HepG2 (cell line): ENCODE measurements at regions of chr12 and their contacts with region 1.

Region 1: DNA sequence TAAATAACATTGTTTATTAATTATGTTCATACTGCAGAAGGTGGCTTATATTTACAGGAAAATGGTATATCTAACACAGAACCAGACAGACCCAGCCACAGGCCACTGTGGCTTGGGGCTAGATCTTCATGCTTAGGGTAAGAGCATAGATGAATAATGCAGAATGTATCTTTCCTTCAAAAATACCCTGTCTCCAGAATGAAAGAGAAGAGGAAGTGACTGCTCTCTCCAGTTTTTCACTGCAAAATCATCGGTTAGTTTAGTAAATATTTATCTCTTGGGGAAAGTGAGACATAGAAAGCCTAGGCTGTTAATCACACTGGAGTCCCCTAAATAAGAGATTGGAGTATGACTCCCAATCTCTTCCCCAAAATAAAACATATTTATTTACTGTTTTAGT is 453.7 kb downstream of the NAV3 start:
- DNase-seq: no peak
- ATAC-seq: no peak
- H3K4me3 ChIP-seq: no peak overlapping the region
- H3K27ac ChIP-seq: no peak overlapping the region
- H3K4me1 ChIP-seq: no peaks in the 10 kb centered on the region
- H3K27me3 ChIP-seq: no peaks in the 10 kb centered on the region
- CTCF ChIP-seq: no peak
- EP300 ChIP-seq: no peak
- POLR2A ChIP-seq: no peak
- RAD21 ChIP-seq: no peak

Region 2: DNA sequence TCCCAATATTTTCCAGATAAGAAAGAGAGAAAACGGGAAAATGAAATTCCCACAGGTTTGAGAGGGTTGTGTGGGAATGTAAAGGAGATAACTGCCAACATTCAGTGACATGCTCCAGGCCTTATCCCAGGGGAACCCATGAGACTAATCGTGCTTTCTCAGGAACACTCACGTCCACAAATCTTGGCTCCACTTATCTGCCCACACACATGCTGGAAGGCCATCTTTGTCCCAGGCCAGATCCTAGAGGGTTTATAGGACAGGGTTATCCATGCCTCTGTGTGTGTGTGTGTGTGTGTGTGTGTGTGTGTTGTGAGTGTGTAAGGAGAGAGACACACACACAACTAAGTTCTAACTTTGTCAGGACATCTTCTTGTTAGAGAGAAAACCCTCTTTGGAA is 1036.9 kb before region 1 on chr12:
- CTCF ChIA-PET with region 1: no interaction called
- POLR2A ChIA-PET with region 1: no interaction called
- in situ Hi-C with region 1: no loop called
- intact Hi-C with region 1: loop called (anchors 5 kb)
- DNase-seq: no peak
- ATAC-seq: no peak
- H3K4me3 ChIP-seq: no peak overlapping the region
- H3K27ac ChIP-seq: no peak overlapping the region
- H3K4me1 ChIP-seq: no peaks in the 10 kb centered on the region
- H3K27me3 ChIP-seq: no peaks in the 10 kb centered on the region
- CTCF ChIP-seq: no peak
- EP300 ChIP-seq: no peak
- POLR2A ChIP-seq: no peak
- RAD21 ChIP-seq: no peak

Region 3: GRCh38 chr12:78088391-78088832 is 196.0 kb before region 1 on chr12:
- CTCF ChIA-PET with region 1: no interaction called
- POLR2A ChIA-PET with region 1: no interaction called
- in situ Hi-C with region 1: no loop called
- intact Hi-C with region 1: no loop called
- DNase-seq: no peak
- ATAC-seq: no peak
- H3K4me3 ChIP-seq: peak overlapping the region in 2 of 3 experiments; percentile 23 to 36; a peak in 5 of 6 replicates
- H3K27ac ChIP-seq: no peak overlapping the region
- H3K4me1 ChIP-seq: no peaks in the 10 kb centered on the region
- H3K27me3 ChIP-seq: no peaks in the 10 kb centered on the region
- CTCF ChIP-seq: no peak
- EP300 ChIP-seq: no peak
- POLR2A ChIP-seq: no peak
- RAD21 ChIP-seq: no peak

Region 4: DNA sequence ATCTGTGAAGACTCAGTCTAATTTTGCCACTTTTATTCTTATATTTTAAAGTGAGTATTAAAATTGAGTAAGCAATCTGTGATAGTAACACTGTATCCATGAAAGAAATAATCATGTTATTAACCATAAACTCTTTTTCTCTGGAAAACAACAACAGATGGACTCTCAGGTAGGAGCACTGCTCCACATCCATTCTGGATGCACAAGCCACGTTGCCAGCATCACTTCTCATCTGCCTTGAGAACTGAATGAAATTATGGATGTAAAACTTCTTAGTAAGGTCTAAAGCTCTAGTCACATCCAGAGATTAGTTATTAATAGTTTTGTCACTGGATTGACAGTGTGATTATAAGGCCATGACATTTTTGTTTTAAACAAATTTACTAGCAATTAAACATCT is 91.0 kb after region 1 on chr12:
- CTCF ChIA-PET with region 1: no interaction called
- POLR2A ChIA-PET with region 1: no interaction called
- in situ Hi-C with region 1: no loop called
- intact Hi-C with region 1: no loop called
- DNase-seq: no peak
- ATAC-seq: no peak
- H3K4me3 ChIP-seq: no peak overlapping the region
- H3K27ac ChIP-seq: no peak overlapping the region
- H3K4me1 ChIP-seq: no peaks in the 10 kb centered on the region
- H3K27me3 ChIP-seq: no peaks in the 10 kb centered on the region
- CTCF ChIP-seq: no peak
- EP300 ChIP-seq: no peak
- POLR2A ChIP-seq: no peak
- RAD21 ChIP-seq: no peak

Region 5: DNA sequence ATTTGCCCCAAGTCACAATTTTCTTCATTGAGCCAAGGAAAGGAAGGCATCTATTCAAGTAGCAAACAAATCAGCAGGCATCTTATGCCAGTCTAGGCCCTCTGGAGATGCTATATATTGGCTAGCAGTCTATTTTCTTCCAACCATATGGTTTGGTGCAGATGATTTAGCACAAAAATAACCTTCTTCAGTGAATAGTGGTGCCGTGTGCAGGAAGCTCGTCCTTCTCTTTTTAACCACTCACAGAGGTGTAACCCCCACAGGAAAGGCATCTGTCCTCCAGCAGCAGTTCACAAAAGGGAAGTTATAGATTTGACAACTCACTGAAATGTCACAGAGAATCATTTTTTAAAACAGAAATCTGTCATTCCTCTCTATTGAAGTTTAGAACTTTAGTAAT is 134.5 kb after region 1 on chr12:
- CTCF ChIA-PET with region 1: no interaction called
- POLR2A ChIA-PET with region 1: no interaction called
- in situ Hi-C with region 1: no loop called
- intact Hi-C with region 1: no loop called
- DNase-seq: no peak
- ATAC-seq: no peak
- H3K4me3 ChIP-seq: no peak overlapping the region
- H3K27ac ChIP-seq: no peak overlapping the region
- H3K4me1 ChIP-seq: no peaks in the 10 kb centered on the region
- H3K27me3 ChIP-seq: no peaks in the 10 kb centered on the region
- CTCF ChIP-seq: no peak
- EP300 ChIP-seq: no peak
- POLR2A ChIP-seq: no peak
- RAD21 ChIP-seq: no peak